IMR-90 (cell line): ENCODE measurements at regions of chr12 and their contacts with region 1.

Region 1: GRCh38 chr12:15575671-15576541 is 213.3 kb downstream of the EPS8 start:
- DNase-seq: no peak
- ATAC-seq: no peak
- H3K4me3 ChIP-seq: no peak overlapping the region
- H3K27ac ChIP-seq: no peak overlapping the region
- H3K4me1 ChIP-seq: peaks cover 2% of the 10 kb centered on the region; the same call in 1 of the 2 replicates
- H3K27me3 ChIP-seq: no peaks in the 10 kb centered on the region
- CTCF ChIP-seq: no peak
- POLR2A ChIP-seq: no peak
- RAD21 ChIP-seq: no peak

Region 2: DNA sequence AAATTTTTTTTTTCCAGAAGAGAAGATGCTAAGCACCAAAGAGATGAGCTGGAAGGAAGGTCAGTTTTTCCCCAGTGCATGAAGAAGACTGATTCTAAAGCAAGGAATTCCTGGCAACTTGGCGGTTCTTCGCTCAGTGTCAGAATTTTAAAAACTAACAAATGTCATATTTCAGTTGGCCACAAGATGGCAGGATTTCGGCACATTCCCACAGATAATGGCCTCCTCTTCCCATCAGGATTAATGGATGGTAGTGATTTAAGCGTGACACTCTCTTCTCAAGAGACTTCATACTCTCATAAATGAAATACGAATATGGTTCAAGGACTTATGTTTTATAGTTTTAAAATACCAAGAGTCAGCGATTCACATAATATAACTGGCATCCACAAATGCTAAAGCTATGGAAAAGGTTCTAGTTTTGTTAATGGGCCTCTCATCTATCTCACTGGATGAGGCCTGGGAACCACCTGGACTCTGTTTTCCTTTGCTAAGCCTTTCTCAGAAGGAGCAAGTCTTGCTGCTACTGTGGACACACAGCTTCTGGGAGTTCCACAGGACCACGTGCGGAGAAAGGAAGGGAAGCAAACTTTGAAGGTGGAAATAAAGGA is 299.7 kb before region 1 on chr12:
- CTCF ChIA-PET with region 1: no interaction called
- POLR2A ChIA-PET with region 1: no interaction called
- dilution Hi-C with region 1: no loop called
- in situ Hi-C with region 1: loop called (anchors 5 kb)
- intact Hi-C with region 1: no loop called
- DNase-seq: peak; percentile 29
- ATAC-seq: peak; percentile 76
- H3K4me3 ChIP-seq: no peak overlapping the region
- H3K27ac ChIP-seq: no peak overlapping the region
- H3K4me1 ChIP-seq: no peaks in the 10 kb centered on the region
- H3K27me3 ChIP-seq: no peaks in the 10 kb centered on the region
- CTCF ChIP-seq: peak; percentile 79
- POLR2A ChIP-seq: no peak
- RAD21 ChIP-seq: peak; percentile 68